ENCODE measurements at regions of chr1 and their contacts with region 1.

Region 1: GRCh38 chr1:71031426-71031825 is 16.2 kb downstream of the PTGER3 start:
- DNase-seq: no peak
- H3K4me3 ChIP-seq: no peak overlapping the region
- H3K27ac ChIP-seq: no peak overlapping the region
- H3K4me1 ChIP-seq: peaks cover 82% of the 10 kb centered on the region
- H3K27me3 ChIP-seq: no peaks in the 10 kb centered on the region
- CTCF ChIP-seq: no peak

Region 2: GRCh38 chr1:69700770-69701169 is 1330.7 kb before region 1 on chr1:
- CTCF ChIA-PET with region 1: no interaction called
- POLR2A ChIA-PET with region 1: no interaction called
- intact Hi-C with region 1: loop called (anchors 10 kb)
- DNase-seq: peak; percentile 27
- H3K4me3 ChIP-seq: no peak overlapping the region
- H3K27ac ChIP-seq: no peak overlapping the region
- H3K4me1 ChIP-seq: no peaks in the 10 kb centered on the region
- H3K27me3 ChIP-seq: peaks cover 3% of the 10 kb centered on the region
- CTCF ChIP-seq: peak; percentile 44

Region 3: DNA sequence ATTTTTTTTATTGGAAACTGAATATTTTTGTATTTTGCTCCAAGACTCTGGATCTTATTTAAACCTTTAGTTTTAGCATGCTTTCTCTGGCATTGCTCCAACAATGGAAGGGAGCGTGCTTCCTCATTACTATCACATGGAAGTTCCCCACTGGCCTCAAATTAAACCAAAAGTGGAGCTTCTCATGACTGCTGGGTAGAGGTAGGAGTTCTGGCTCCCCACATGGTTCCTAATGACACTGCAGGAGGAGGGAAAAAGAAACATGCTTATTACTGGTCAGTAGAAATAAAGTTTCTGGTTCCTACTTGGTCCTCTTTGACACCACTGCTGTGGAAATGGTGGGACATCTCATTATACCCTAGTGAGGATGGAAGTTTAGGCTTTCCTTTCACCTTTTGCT is 294.3 kb before region 1 on chr1:
- CTCF ChIA-PET with region 1: no interaction called
- POLR2A ChIA-PET with region 1: no interaction called
- intact Hi-C with region 1: loop called (anchors 5 kb)
- DNase-seq: peak; percentile 87
- H3K4me3 ChIP-seq: no peak overlapping the region
- H3K27ac ChIP-seq: no peak overlapping the region
- H3K4me1 ChIP-seq: peaks cover 28% of the 10 kb centered on the region
- H3K27me3 ChIP-seq: no peaks in the 10 kb centered on the region
- CTCF ChIP-seq: peak; percentile 40; the same call in 1 of the 2 replicates

Region 4: GRCh38 chr1:70896224-70896623 is 135.2 kb before region 1 on chr1:
- CTCF ChIA-PET with region 1: no interaction called
- POLR2A ChIA-PET with region 1: no interaction called
- intact Hi-C with region 1: no loop called
- DNase-seq: peak; percentile 59
- H3K4me3 ChIP-seq: no peak overlapping the region
- H3K27ac ChIP-seq: no peak overlapping the region
- H3K4me1 ChIP-seq: peaks cover 30% of the 10 kb centered on the region
- H3K27me3 ChIP-seq: no peaks in the 10 kb centered on the region
- CTCF ChIP-seq: peak; percentile 61

Measured in A673 (cell line).